H1 (cell line): ENCODE measurements at regions of chr11 and their contacts with region 1.

Region 1: GRCh38 chr11:72430741-72431570 is 3.4 kb downstream of the CLPB start:
- DNase-seq: no peak
- H3K4me3 ChIP-seq: no peak overlapping the region
- H3K27ac ChIP-seq: no peak overlapping the region
- H3K4me1 ChIP-seq: peaks cover 0 to 4% (median 1%) of the 10 kb centered on the region in 4 experiments; a peak in 2 of 7 replicates
- H3K27me3 ChIP-seq: no peaks in the 10 kb centered on the region
- CTCF ChIP-seq: peak; percentile 71 to 94 (median 89)
- EP300 ChIP-seq: no peak
- POLR2A ChIP-seq: no peak
- RAD21 ChIP-seq: peak; percentile 98

Region 2: DNA sequence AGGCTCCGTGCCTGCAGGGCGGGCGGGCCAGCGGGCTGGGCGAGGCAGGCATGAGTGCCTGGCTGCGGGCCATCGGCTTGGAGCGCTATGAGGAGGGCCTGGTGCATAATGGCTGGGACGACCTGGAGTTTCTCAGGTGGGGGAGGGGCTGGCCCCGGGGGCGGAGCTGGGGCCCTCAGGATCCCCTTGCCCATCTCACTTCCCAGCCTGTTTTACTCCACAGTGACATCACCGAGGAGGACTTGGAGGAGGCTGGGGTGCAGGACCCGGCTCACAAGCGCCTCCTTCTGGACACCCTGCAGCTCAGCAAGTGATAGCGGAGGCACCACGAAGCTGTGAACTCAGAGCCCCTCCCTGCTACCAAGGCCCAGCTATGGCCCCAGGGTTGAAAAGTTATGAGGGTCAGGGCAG is 192.9 kb before region 1 on chr11:
- CTCF ChIA-PET with region 1: interaction called, 101 read pairs
- POLR2A ChIA-PET with region 1: interaction called, 6 read pairs
- DNase-seq: peak; percentile 85 to 92
- H3K4me3 ChIP-seq: peak overlapping the region in 3 of 4 experiments; percentile 9 to 60 (median 34); a peak in 4 of 8 replicates
- H3K27ac ChIP-seq: 0 out of 2 replicates have a peak overlapping the region, but pooled peaks have one; percentile 6
- H3K4me1 ChIP-seq: peaks cover 3 to 29% (median 23%) of the 10 kb centered on the region in 4 experiments
- H3K27me3 ChIP-seq: peaks cover 36 to 47% (median 44%) of the 10 kb centered on the region in 4 experiments
- CTCF ChIP-seq: peak; percentile 88 to 95 (median 92)
- EP300 ChIP-seq: peak in 1 of 2 experiments; percentile 56; a peak in 1 of 3 replicates
- POLR2A ChIP-seq: no peak
- RAD21 ChIP-seq: peak; percentile 74 to 81

Region 3: DNA sequence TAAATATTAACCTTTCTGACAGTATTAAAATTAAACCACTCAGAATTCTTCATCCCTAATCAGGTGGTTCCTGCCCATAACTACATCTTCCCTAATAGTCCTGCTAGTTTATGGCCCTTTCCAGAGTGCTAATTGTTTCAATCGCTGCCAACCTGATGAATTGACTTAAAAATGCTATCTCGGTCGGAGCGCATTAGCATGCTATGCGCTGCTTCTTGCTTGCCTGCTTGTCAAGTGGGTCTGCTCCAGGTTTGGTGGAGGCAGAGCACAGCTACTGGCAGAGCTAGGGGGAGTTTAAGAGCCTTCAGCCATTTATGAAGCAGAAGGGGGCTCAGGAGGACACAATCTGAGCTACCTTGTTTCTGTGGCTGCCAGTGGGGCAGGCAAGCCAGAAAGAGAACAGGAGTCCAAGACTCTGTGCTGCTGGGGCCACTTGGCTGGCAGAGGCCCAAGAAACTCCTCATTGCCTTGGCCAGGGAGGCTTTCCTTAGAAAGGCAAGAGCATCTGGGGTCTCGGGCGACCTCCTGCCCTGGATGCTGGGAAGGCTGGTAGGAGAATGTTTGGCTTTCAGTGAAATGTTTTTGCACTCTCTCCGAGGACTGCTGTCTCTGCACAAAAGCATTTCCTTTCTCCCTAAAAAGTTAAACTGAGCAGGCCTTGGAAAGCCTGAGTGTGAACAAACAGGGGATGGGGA is 124.9 kb before region 1 on chr11:
- CTCF ChIA-PET with region 1: interaction called, 124 read pairs
- POLR2A ChIA-PET with region 1: interaction called, 3 read pairs
- DNase-seq: no peak
- H3K4me3 ChIP-seq: no peak overlapping the region
- H3K27ac ChIP-seq: no peak overlapping the region
- H3K4me1 ChIP-seq: no peaks in the 10 kb centered on the region
- H3K27me3 ChIP-seq: no peaks in the 10 kb centered on the region
- CTCF ChIP-seq: no peak
- EP300 ChIP-seq: no peak
- POLR2A ChIP-seq: no peak
- RAD21 ChIP-seq: no peak

Region 4: DNA sequence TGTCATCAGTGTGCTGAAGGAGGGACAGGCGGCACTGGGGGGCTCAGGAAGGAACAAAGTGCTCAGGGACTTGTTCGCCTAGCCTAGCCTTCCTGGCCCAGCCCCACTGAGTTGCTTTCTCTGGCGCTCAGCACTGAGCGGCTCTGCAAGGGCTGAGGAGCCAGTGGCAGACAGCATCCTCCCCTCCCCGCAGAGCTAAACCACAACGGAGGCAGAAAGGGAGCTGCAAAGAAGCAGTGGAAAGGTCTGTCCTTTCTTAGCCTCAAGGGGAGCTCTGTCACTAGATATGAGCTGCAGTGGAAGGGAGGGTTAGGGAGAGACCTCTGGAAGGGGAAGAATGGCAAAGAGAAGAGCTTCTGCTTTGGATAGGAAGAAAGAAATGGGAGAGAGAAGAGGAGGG is 97.3 kb before region 1 on chr11:
- CTCF ChIA-PET with region 1: interaction called, 99 read pairs
- POLR2A ChIA-PET with region 1: no interaction called
- DNase-seq: peak; percentile 59 to 66
- H3K4me3 ChIP-seq: peak overlapping the region in 2 of 4 experiments; percentile 15 to 16; a peak in 1 of 8 replicates
- H3K27ac ChIP-seq: no peak overlapping the region
- H3K4me1 ChIP-seq: peaks cover 5 to 17% (median 9%) of the 10 kb centered on the region in 4 experiments
- H3K27me3 ChIP-seq: no peaks in the 10 kb centered on the region
- CTCF ChIP-seq: peak; percentile 15 to 81 (median 78)
- EP300 ChIP-seq: no peak
- POLR2A ChIP-seq: no peak
- RAD21 ChIP-seq: peak; percentile 71 to 85

Region 5: DNA sequence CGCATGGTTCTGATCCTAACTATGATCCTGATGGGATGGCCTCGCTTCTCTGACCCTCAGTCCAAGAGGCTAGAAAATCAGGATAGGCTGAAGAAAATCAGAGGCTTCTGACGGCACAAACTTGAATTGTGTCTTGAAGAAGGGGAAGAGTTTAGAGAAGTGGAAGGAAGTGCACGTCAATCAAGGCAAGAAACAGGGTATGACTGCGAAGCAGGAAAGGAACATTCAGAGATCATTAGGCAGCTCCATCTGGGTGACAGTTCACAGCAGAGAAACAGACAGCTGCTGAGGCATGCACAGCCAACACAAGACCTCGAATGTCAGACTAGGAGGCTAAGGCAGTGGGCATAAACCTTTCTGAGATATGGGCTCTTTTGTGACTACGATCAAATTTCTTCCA is 25.9 kb before region 1 on chr11:
- CTCF ChIA-PET with region 1: interaction called, 262 read pairs
- POLR2A ChIA-PET with region 1: no interaction called
- DNase-seq: no peak
- H3K4me3 ChIP-seq: no peak overlapping the region
- H3K27ac ChIP-seq: no peak overlapping the region
- H3K4me1 ChIP-seq: peaks cover 0 to 7% (median 2%) of the 10 kb centered on the region in 4 experiments; a peak in 6 of 7 replicates
- H3K27me3 ChIP-seq: no peaks in the 10 kb centered on the region
- CTCF ChIP-seq: no peak
- EP300 ChIP-seq: no peak
- POLR2A ChIP-seq: no peak
- RAD21 ChIP-seq: no peak

Region 6: GRCh38 chr11:72454791-72455190 is 23.8 kb after region 1 on chr11:
- CTCF ChIA-PET with region 1: interaction called, 105 read pairs
- POLR2A ChIA-PET with region 1: no interaction called
- DNase-seq: no peak
- H3K4me3 ChIP-seq: no peak overlapping the region
- H3K27ac ChIP-seq: no peak overlapping the region
- H3K4me1 ChIP-seq: no peaks in the 10 kb centered on the region
- H3K27me3 ChIP-seq: no peaks in the 10 kb centered on the region; a peak in 3 of 7 replicates
- CTCF ChIP-seq: peak; percentile 38 to 56 (median 43)
- EP300 ChIP-seq: no peak
- POLR2A ChIP-seq: no peak
- RAD21 ChIP-seq: peak; percentile 12 to 44; a peak in 2 of 4 replicates